ENCODE measurements at regions of chr19 and their contacts with region 1.

Region 1: GRCh38 chr19:11035441-11036377 is 53.6 kb upstream of the LDLR start:
- DNase-seq: peak; percentile 19
- H3K4me3 ChIP-seq: no peak overlapping the region
- H3K27me3 ChIP-seq: no peaks in the 10 kb centered on the region
- CTCF ChIP-seq: peak; percentile 96

Region 2: DNA sequence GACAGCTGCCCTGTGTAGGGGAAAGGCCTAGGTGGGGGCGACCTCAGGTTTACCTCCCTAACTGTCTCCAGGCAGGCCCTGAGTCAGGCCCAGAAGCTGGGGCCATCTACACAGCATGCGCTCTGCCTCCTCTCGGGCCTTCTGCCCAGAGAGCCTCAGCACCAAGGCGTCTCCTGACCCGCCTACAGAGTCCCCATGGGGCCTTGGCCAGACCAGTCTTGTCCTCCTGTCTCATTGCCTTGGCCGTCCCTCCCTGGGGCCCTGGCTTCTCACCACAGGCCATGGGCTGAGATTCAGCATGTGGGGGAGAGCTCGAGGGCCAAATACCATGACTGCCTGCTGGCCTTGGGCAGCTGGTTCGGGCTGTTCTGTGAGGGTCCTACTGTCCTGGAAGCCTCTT is 15.9 kb before region 1 on chr19:
- CTCF ChIA-PET with region 1: interaction called, 27 read pairs
- POLR2A ChIA-PET with region 1: no interaction called
- DNase-seq: no peak
- H3K4me3 ChIP-seq: no peak overlapping the region
- H3K27me3 ChIP-seq: no peaks in the 10 kb centered on the region
- CTCF ChIP-seq: no peak

Region 3: GRCh38 chr19:11067356-11068113 is 31.8 kb after region 1 on chr19:
- CTCF ChIA-PET with region 1: interaction called, 10 read pairs
- POLR2A ChIA-PET with region 1: no interaction called
- DNase-seq: no peak
- H3K4me3 ChIP-seq: no peak overlapping the region
- H3K27me3 ChIP-seq: no peaks in the 10 kb centered on the region
- CTCF ChIP-seq: no peak

Region 4: GRCh38 chr19:11096210-11096841 is 60.6 kb after region 1 on chr19:
- CTCF ChIA-PET with region 1: interaction called, 18 read pairs
- POLR2A ChIA-PET with region 1: no interaction called
- DNase-seq: no peak
- H3K4me3 ChIP-seq: no peak overlapping the region
- H3K27me3 ChIP-seq: no peaks in the 10 kb centered on the region
- CTCF ChIP-seq: no peak

Region 5: GRCh38 chr19:11203194-11204075 is 167.7 kb after region 1 on chr19:
- CTCF ChIA-PET with region 1: interaction called, 13 read pairs
- POLR2A ChIA-PET with region 1: no interaction called
- DNase-seq: peak; percentile 57
- H3K4me3 ChIP-seq: no peak overlapping the region
- H3K27me3 ChIP-seq: no peaks in the 10 kb centered on the region
- CTCF ChIP-seq: peak; percentile 97

Measured in BJ (cell line).